Dendritic cell treated with granulocyte-macrophage colony-stimulating factor and Interleukin-4, amounts not matched to agents 40 ng/mL and 50 ng/mL, for 4 days (primary cell): ENCODE measurements at regions of chr3 and their contacts with region 1.

Region 1: GRCh38 chr3:124905849-124906248 is 18.7 kb upstream of the ITGB5 start:
- H3K4me3 Mint-ChIP-seq: no peak overlapping the region
- H3K27ac Mint-ChIP-seq: no peak overlapping the region
- H3K4me1 Mint-ChIP-seq: no peaks in the 10 kb centered on the region
- H3K27me3 Mint-ChIP-seq: peaks cover 20% of the 10 kb centered on the region

Region 2: GRCh38 chr3:124761250-124761796 is 144.5 kb before region 1 on chr3:
- intact Hi-C with region 1: loop called (anchors 1 kb)
- H3K4me3 Mint-ChIP-seq: no peak overlapping the region
- H3K27ac Mint-ChIP-seq: no peak overlapping the region
- H3K4me1 Mint-ChIP-seq: peaks cover 12% of the 10 kb centered on the region
- H3K27me3 Mint-ChIP-seq: peaks cover 15% of the 10 kb centered on the region

Region 3: GRCh38 chr3:124786441-124787241 is 119.2 kb before region 1 on chr3:
- intact Hi-C with region 1: loop called (anchors 1 kb)
- H3K4me3 Mint-ChIP-seq: no peak overlapping the region
- H3K27ac Mint-ChIP-seq: peak overlapping the region; percentile 24
- H3K4me1 Mint-ChIP-seq: peaks cover 47% of the 10 kb centered on the region
- H3K27me3 Mint-ChIP-seq: peaks cover 17% of the 10 kb centered on the region

Region 4: DNA sequence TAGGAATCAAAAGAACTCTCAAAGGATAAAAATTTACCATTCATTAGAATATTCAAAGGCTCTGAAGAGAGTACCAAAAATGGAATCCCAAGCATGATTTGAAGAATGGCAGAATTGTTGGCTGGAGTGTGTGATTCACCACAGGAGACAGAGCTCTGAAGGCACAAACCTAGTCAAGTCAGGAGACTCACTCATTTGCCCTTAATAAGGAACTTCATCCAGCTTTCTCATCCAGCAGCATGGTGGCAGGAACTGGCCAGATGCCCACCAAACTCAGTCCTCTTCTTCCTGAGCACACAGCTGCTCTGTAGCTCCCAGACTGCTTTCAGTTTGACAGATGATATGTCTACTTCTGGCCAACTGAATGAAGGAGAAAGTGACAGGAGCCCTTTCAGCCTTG is 166.5 kb after region 1 on chr3:
- intact Hi-C with region 1: no loop called
- H3K4me3 Mint-ChIP-seq: no peak overlapping the region
- H3K27ac Mint-ChIP-seq: no peak overlapping the region
- H3K4me1 Mint-ChIP-seq: peaks cover 19% of the 10 kb centered on the region
- H3K27me3 Mint-ChIP-seq: no peaks in the 10 kb centered on the region